A673 (cell line): ENCODE measurements at regions of chr14 and their contacts with region 1.

Region 1: DNA sequence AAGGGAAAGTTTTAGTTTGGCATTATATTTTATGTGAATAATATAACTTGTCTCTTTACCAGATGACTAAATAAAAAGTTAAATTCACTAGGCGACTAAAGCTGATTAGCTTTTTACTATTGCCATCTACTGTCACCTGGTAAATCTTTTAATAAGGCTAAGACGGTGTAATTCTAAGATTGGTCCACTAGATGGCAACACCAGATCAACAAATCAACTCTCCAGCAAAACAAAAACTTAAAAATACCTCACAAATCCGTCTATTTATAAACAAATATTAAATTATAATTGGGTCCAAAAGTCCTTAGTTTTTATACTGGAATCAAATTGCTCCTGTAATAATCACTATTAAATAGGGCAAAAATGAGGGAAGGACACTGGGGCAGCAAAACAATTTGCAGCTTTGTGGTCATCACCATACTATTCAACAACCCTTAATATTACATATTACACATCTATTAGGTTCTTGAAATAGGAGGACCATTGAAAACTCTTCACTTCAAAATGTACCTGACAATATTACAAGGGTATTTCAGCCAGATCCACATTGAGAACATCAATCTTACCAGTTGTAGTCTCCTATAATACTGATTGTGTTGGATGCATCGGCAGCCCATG is 47.9 kb downstream of the GALC start:
- DNase-seq: peak; percentile 51
- H3K4me3 ChIP-seq: no peak overlapping the region
- H3K27ac ChIP-seq: no peak overlapping the region
- H3K4me1 ChIP-seq: no peaks in the 10 kb centered on the region
- H3K27me3 ChIP-seq: no peaks in the 10 kb centered on the region
- CTCF ChIP-seq: peak; percentile 66

Region 2: GRCh38 chr14:87971010-87971409 is 25.9 kb after region 1 on chr14:
- CTCF ChIA-PET with region 1: no interaction called
- POLR2A ChIA-PET with region 1: no interaction called
- intact Hi-C with region 1: no loop called
- DNase-seq: no peak
- H3K4me3 ChIP-seq: no peak overlapping the region
- H3K27ac ChIP-seq: no peak overlapping the region
- H3K4me1 ChIP-seq: no peaks in the 10 kb centered on the region
- H3K27me3 ChIP-seq: no peaks in the 10 kb centered on the region
- CTCF ChIP-seq: no peak

Region 3: GRCh38 chr14:88168498-88169165 is 223.5 kb after region 1 on chr14:
- CTCF ChIA-PET with region 1: interaction called, 5 read pairs
- POLR2A ChIA-PET with region 1: no interaction called
- intact Hi-C with region 1: loop called (anchors 2 kb)
- DNase-seq: peak; percentile 68
- H3K4me3 ChIP-seq: no peak overlapping the region
- H3K27ac ChIP-seq: no peak overlapping the region
- H3K4me1 ChIP-seq: no peaks in the 10 kb centered on the region
- H3K27me3 ChIP-seq: no peaks in the 10 kb centered on the region
- CTCF ChIP-seq: peak; percentile 77

Region 4: GRCh38 chr14:88233915-88234314 is 288.8 kb after region 1 on chr14:
- CTCF ChIA-PET with region 1: no interaction called
- POLR2A ChIA-PET with region 1: no interaction called
- intact Hi-C with region 1: loop called (anchors 2 kb)
- DNase-seq: peak; percentile 38
- H3K4me3 ChIP-seq: no peak overlapping the region
- H3K27ac ChIP-seq: no peak overlapping the region
- H3K4me1 ChIP-seq: no peaks in the 10 kb centered on the region
- H3K27me3 ChIP-seq: peaks cover 6% of the 10 kb centered on the region
- CTCF ChIP-seq: peak; percentile 53